GM12878 (cell line): ENCODE measurements at regions of chr11 and their contacts with region 1.

Region 1: GRCh38 chr11:126194121-126194543 is 17.3 kb downstream of the RPUSD4 start:
- DNase-seq: no peak
- ATAC-seq: peak; percentile 56
- H3K4me3 ChIP-seq: no peak overlapping the region
- H3K27ac ChIP-seq: no peak overlapping the region
- H3K4me1 ChIP-seq: peaks cover 14% of the 10 kb centered on the region
- H3K27me3 ChIP-seq: no peaks in the 10 kb centered on the region
- CTCF ChIP-seq: peak; percentile 43 to 70 (median 54); a peak in 5 of 6 replicates
- EP300 ChIP-seq: no peak
- POLR2A ChIP-seq: no peak
- RAD21 ChIP-seq: peak; percentile 83

Region 2: GRCh38 chr11:125933030-125933813 is 260.9 kb before region 1 on chr11:
- CTCF ChIA-PET with region 1: interaction called, 220 read pairs
- POLR2A ChIA-PET with region 1: no interaction called
- RAD21 ChIA-PET with region 1: interaction called, 8 read pairs
- SMC1A ChIA-PET with region 1: interaction called, 12 read pairs
- in situ Hi-C with region 1: no loop called
- intact Hi-C with region 1: no loop called
- DNase-seq: no peak
- ATAC-seq: peak; percentile 67
- H3K4me3 ChIP-seq: no peak overlapping the region
- H3K27ac ChIP-seq: no peak overlapping the region
- H3K4me1 ChIP-seq: no peaks in the 10 kb centered on the region
- H3K27me3 ChIP-seq: no peaks in the 10 kb centered on the region; a peak in 1 of 4 replicates
- CTCF ChIP-seq: no peak
- EP300 ChIP-seq: no peak
- POLR2A ChIP-seq: no peak
- RAD21 ChIP-seq: no peak

Region 3: DNA sequence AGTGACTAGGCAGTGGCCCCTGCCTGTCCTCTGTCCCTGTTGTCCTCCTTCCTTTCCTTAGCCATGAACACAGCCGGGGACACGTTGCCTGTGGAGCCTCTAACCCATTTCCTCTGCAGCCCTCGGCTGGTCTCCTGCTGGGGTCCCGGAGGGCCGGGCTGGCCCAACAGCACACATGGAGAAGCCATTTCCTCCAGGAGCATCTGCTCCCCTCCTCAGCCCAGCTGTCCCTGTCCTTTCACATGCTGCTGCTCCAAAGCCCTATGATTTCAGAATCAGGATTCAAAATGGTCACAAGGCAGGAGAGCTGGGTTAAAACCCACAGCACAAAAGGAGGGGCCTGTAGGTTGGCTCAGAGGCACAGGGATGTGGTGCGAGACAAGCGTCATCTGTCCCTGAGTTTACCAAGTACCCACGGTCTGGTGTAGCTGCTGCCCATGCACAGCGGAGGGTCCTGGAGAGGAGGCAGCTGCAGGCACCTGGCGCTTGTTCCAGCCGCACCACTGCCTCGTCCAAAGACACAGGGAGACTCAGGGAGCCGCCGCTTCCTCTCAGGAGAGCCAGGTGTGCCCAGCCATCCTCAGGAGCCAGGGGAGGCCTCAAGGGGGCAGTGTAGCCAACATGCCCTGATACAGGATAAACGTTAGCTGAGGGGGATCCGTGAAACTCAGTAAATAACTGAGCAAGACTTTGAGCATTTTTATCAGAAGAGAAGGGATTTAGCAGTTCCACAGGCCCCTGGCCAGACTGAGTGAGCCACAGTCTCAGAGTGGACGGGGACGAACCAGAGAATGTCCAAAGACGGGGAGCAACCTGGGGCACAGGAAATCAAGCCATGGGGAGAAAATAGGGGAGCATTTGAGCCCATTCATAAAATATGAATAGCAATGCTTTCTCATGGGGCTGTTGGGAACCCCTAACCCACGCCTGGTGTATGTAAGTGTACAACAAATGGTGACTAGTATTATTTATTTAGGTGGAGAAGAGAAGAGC is 252.2 kb before region 1 on chr11:
- CTCF ChIA-PET with region 1: interaction called, 220 read pairs
- POLR2A ChIA-PET with region 1: no interaction called
- RAD21 ChIA-PET with region 1: interaction called, 10 read pairs
- SMC1A ChIA-PET with region 1: interaction called, 45 read pairs
- in situ Hi-C with region 1: no loop called
- intact Hi-C with region 1: loop called (anchors 1 kb)
- DNase-seq: no peak
- ATAC-seq: peak; percentile 96
- H3K4me3 ChIP-seq: no peak overlapping the region
- H3K27ac ChIP-seq: no peak overlapping the region
- H3K4me1 ChIP-seq: no peaks in the 10 kb centered on the region
- H3K27me3 ChIP-seq: no peaks in the 10 kb centered on the region; a peak in 1 of 4 replicates
- CTCF ChIP-seq: peak; percentile 73 to 87 (median 83)
- EP300 ChIP-seq: no peak
- POLR2A ChIP-seq: no peak
- RAD21 ChIP-seq: peak; percentile 67